Cardiac septum (tissue), 1 donor: ENCODE measurements at regions of chr4 and their contacts with region 1.

Region 1: DNA sequence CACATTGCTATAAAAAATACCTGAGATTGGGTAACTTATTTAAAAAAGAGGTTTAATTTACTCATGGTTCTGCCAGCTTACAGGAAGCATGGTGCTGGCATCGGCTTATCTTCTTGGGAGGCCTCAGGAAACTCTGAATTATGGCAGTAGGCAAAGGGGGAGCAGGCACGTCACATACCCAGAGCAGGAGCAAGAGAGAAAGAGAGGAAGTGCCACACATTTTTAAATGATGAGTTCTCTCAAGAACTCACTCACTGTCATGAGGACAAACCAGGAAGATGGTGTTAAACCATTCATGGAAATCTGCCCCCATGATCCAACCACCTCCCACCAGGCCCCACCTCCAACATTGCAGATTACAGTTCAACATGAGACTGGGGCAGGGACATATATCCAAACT is 10.0 kb upstream of the AFF1 start:
- DNase-seq: no peak

Region 2: DNA sequence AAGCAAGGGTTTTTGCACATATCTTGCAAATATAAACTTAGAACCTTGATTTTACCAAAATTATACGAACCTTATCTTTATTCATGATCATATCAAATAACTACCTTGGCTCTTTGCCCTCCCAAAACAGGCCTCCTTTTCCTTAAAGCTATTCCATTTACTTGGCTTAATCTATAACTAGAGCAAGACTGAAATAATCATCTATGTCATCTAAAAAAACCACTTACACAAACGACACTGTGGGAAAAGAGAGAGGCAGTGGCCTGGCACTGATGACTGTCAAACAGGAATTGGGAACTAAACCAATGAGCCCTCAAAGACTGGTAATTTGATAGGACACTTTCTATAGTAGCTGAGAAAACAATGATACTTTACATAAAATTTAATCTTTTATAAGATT is 342.4 kb before region 1 on chr4:
- intact Hi-C with region 1: no loop called
- DNase-seq: no peak

Region 3: DNA sequence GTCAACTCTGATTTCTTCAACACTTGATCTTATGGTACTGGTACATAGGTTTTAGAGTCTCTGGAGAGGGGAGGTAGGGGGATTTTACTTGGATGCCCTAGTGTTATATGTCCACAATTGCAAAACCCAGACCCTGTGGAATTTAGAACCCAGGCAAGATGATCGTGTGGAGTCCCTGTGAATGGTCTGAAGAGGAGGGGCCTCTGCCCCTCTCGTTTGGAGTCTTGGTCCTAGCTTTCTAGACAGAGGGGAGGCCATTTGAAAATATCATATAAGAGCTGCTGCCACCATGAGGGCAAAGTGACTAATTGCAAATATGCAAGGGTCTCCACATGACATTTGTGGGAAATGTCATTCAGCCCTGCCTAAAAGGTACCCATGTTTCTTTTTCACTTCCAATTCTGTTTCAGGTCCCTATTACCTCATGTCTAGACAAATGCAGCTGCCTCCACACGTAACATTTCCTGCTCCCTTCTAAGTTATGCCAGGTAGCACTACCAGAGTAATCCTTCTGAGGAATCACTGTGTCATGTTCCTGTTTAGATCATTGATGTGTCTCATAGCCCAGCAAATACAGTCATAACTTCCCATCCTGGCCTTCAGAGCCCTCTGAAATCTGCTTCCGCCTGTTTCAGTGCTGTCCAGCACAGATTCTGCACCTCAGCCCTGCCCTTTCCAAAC is 168.8 kb after region 1 on chr4:
- intact Hi-C with region 1: loop called (anchors 1 kb)
- DNase-seq: no peak

Region 4: DNA sequence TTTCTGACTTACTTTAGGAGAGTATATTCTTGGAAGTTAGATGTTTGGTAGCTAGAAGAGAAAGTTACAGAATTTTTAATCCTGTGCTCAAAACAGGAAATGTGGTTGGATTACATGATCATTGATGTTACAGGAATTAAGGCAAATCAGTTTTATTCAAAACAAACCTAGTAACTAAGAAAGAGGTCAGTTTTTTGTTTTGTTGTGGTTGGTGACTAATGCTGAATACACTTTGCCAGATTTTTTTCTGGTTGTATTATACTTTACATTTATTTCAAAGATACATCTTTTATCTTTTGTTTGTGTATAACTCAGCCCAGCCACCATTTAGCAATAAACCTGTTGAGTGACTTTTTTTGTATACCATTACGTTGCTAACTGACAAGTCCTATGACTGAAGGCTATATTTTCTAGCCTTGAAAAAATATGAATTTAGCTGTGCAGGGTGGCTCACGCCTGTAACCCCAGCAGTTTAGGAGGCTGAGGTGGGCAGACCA is 178.9 kb after region 1 on chr4:
- intact Hi-C with region 1: no loop called
- DNase-seq: no peak

Region 5: DNA sequence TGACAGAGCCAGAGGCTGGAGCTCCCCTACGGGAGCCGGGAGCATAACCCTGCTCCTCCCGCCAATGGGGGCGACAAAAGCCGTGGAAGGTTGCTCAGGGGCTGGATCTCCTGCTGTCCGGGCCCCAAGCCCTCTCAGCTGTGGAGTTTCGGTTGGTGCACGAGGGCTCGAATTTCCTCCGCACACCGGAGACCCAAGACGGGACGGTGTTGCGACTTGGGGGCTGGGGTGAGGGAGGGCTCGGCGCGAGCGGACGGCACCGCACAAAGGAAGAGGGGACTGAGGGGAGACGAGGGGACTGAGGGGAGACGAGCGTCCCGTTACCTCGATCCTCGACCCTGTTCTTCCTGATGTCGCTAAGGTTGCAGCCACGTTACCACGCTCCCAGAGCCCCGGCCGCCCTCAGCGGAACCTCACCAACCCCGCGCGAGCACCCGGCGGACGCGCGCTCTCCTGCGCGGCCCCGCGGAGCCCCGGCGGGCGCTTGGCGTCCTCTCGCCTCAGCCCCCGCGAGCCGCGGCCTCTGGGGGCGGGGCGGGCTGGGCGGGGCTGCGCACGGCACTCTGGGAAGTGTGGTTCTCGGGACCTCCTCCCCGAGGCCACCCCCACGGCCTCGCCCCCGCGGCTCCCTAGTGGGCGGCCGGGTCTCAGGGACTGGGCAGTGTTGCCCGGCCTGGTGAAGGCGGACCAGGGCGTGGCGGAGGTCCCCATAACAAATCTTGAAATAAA is 295.4 kb after region 1 on chr4 and contains the start of gene KLHL8:
- intact Hi-C with region 1: loop called (anchors 5 kb)
- DNase-seq: peak; percentile 94
- total RNA-seq, gene KLHL8: 11.2 TPM

Region 6: DNA sequence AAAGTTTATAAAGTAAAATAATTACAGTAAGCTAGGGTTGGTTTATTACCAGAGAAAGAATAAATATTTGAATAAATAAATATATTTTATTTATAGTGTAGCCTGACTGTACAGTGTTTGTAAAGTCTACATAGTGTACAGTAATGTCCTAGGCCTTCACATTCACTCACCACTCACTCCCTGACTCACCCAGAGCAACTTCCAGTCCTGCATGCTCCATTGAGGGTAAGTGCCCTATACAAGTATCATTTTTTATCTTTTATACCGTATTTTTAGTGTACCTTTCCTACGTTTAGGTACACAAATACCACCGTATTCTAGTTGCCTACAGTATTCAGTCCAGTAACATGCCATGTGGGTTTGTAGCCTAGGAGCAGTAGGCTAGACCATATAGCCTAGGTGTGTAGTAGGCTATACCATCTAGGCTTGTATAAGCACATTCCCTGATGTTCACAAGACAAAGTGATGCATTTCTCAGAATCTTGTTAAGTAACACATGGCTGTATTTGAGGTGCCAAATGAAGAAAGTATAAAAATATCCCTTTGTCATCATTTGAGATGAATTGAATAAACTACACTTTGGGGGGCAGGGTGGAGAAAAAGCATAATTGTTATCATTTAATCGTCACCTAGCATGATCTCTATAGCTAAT is 310.3 kb after region 1 on chr4:
- intact Hi-C with region 1: loop called (anchors 2 kb)
- DNase-seq: no peak